Activated CD4-positive, alpha-beta T cell treated with anti-CD3 and anti-CD28 coated beads, Interleukin-2, amount 10 ng/mL, durations not matched to agents 7 days and 5 days (primary cell): ENCODE measurements at regions of chr22 and their contacts with region 1.

Region 1: GRCh38 chr22:37643225-37643847 is 3.9 kb downstream of the SH3BP1 start:
- DNase-seq: peak; percentile 89
- H3K4me3 Mint-ChIP-seq: peak overlapping the region; percentile 49
- H3K27ac Mint-ChIP-seq: peak overlapping the region; percentile 68
- H3K4me1 Mint-ChIP-seq: peaks cover 33% of the 10 kb centered on the region
- H3K27me3 Mint-ChIP-seq: no peaks in the 10 kb centered on the region

Region 2: DNA sequence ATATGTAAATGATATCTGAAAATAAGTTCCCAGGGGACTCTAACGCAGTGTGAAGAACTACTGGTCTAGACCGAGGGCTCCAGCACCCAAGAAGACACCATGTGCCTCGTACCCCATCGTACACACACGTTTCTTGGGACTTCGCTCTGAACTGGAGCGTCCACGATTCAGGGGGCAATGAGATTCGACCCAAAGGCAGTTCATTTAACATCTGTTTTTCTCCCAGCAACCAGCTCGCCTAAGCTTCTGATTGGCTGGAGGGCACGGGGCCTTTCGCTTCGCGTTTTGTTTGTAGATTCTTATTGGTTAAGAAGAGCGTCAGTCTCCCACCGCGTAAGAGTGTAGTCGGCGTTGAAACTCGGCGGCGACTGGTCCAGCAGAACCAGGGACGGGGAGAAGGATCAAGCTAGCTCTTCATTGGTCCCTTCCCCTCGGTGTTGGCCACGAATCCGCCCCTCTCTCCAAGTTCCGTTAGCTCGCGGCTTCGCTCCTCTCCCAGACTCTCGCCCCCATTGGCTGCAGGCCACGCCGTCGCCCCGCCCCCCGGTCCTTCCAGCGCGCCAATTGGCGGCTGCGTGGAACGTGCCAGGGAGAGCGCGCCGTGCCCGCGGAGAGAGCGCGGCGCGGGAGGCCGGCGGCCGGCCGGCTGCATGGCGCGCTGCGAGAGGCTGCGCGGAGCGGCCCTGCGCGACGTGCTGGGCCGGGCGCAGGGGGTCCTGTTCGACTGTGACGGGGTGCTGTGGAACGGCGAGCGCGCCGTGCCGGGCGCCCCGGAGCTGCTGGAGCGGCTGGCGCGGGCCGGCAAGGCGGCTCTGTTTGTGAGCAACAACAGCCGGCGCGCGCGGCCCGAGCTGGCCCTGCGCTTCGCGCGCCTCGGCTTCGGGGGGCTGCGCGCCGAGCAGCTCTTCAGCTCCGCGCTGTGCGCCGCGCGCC is 15.1 kb after region 1 on chr22 and contains the start of gene PDXP:
- CTCF ChIA-PET with region 1: interaction called, 47 read pairs
- POLR2A ChIA-PET with region 1: interaction called, 5 read pairs
- DNase-seq: peak; percentile 99
- H3K4me3 Mint-ChIP-seq: peak within 1 kb of the TSS; percentile 85
- H3K27ac Mint-ChIP-seq: peak within 1 kb of the TSS; percentile 87
- H3K4me1 Mint-ChIP-seq: peaks cover 42% of the 10 kb centered on the region
- H3K27me3 Mint-ChIP-seq: no peaks in the 10 kb centered on the region
- total RNA-seq, gene PDXP: 21.5 to 21.8 TPM

Region 3: GRCh38 chr22:37669586-37669985 is 26.2 kb after region 1 on chr22:
- CTCF ChIA-PET with region 1: interaction called, 143 read pairs
- POLR2A ChIA-PET with region 1: interaction called, 3 read pairs
- DNase-seq: no peak
- H3K4me3 Mint-ChIP-seq: no peak overlapping the region
- H3K27ac Mint-ChIP-seq: no peak overlapping the region
- H3K4me1 Mint-ChIP-seq: peaks cover 34% of the 10 kb centered on the region
- H3K27me3 Mint-ChIP-seq: no peaks in the 10 kb centered on the region

Region 4: DNA sequence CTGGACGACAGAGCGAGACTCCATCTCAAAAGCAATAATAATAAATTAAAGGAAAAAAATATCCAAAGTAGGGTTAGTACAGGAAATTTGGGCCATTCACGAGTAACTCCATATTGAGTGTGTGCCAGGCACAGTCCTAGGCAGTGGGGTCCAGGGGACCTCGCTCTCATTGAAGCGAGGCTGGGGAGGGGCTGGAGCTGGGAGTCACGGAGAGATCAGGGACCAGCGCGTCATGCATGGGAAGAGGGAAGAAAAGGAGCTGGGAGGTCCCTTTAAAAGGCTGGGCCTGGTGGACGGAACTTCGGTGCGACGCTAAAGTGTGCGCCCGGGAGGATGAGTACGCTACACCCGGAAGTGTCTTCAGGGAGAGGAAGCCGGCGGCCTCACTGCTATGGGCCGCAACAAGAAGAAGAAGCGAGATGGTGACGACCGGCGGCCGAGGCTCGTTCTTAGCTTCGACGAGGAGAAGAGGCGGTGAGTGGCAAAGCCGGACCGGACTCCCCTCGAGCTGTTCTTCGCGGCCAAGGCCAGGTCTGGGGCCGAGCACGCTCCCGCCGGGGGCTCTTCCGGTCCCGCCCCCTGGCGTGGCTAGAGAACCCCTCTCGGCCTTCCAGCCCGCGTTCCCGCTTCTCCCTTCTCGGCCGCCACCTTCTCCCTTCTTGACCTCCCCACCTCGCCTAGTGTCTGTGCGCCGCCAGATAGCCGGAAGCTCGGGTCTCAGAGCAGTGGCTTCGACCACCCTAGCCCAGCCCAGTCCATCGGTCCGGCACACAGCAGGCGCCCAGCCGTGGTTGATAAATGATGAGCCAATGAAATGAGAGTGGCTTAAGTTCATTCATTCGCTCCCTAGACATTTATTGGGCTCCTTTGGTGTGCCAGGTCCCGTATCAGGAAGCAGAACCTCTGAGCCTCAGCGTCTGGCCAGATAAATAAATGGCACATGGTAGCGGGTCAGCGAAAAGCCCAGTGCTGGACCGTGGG is 43.0 kb after region 1 on chr22 and contains the start of gene NOL12:
- CTCF ChIA-PET with region 1: interaction called, 143 read pairs
- POLR2A ChIA-PET with region 1: interaction called, 3 read pairs
- DNase-seq: peak; percentile 80
- H3K4me3 Mint-ChIP-seq: peak within 1 kb of the TSS; percentile 94
- H3K27ac Mint-ChIP-seq: peak within 1 kb of the TSS; percentile 96
- H3K4me1 Mint-ChIP-seq: peaks cover 31% of the 10 kb centered on the region
- H3K27me3 Mint-ChIP-seq: no peaks in the 10 kb centered on the region
- total RNA-seq, gene NOL12: 57.3 to 57.7 TPM

Region 5: GRCh38 chr22:37696657-37697537 is 53.6 kb after region 1 on chr22 and contains the start of gene TRIOBP:
- CTCF ChIA-PET with region 1: interaction called, 10 read pairs
- POLR2A ChIA-PET with region 1: no interaction called
- DNase-seq: peak; percentile 94
- H3K4me3 Mint-ChIP-seq: peak within 1 kb of the TSS; percentile 62
- H3K27ac Mint-ChIP-seq: peak within 1 kb of the TSS; percentile 36
- H3K4me1 Mint-ChIP-seq: peaks cover 17% of the 10 kb centered on the region
- H3K27me3 Mint-ChIP-seq: no peaks in the 10 kb centered on the region
- total RNA-seq, gene TRIOBP: 44.1 to 53.5 TPM